Naive thymus-derived CD4-positive, alpha-beta T cell (primary cell): ENCODE measurements at regions of chr7 and their contacts with region 1.

Region 1: DNA sequence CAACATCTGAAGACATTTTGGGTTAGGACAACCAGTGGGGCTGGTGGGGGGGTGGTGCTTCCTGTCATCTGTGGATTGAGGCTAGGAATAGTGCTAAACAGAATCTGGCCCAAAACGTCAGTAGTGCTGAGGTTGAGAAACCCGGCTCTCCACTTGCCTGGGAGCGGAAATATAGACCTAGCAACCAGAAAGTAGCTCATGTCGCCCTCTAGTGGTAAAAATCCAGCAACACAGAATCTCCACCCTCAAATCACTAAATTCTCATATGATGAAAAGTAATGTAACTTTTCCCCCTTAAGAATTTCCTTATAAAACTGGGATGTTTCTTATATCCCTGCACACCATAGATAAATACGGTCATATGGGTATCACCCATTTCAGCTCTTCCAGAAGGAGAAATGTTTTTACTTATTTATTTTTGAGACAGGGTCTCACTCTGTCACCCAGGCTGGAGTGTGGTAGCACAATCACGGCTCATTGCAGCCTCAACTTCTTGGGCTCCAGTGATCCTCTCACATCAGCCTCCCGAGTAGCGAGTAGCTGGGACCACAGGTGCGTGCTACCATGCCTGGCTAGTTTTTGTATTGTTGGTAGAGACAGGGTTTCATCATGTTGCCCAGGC is 34.4 kb downstream of the ZC3HAV1 start:
- DNase-seq: peak; percentile 20 to 82 (median 76)
- ATAC-seq: peak; percentile 91
- H3K4me3 ChIP-seq: no peak overlapping the region
- H3K4me3 Mint-ChIP-seq: peak overlapping the region in 9 of 10 donors; percentile 45 to 77 (median 65)
- H3K27ac ChIP-seq: peak overlapping the region; percentile 64
- H3K27ac Mint-ChIP-seq: peak overlapping the region; percentile 73 to 92 (median 84)
- H3K4me1 ChIP-seq: peaks cover 16 to 55% of the 10 kb centered on the region in 2 donors
- H3K4me1 Mint-ChIP-seq: peaks cover 37 to 81% (median 73%) of the 10 kb centered on the region in 7 donors
- H3K27me3 ChIP-seq: no peaks in the 10 kb centered on the region
- H3K27me3 Mint-ChIP-seq: no peaks in the 10 kb centered on the region

Region 2: GRCh38 chr7:138886501-138886917 is 188.6 kb before region 1 on chr7:
- CTCF ChIA-PET with region 1: interaction called, 14 read pairs
- POLR2A ChIA-PET with region 1: interaction called, 6 read pairs
- intact Hi-C with region 1: loop called (anchors 1 kb)
- DNase-seq: peak in 7 of 9 donors; percentile 63 to 82 (median 78)
- ATAC-seq: peak; percentile 91
- H3K4me3 ChIP-seq: no peak overlapping the region
- H3K4me3 Mint-ChIP-seq: peak overlapping the region in 7 of 10 donors; percentile 41 to 67 (median 60)
- H3K27ac ChIP-seq: no peak overlapping the region
- H3K27ac Mint-ChIP-seq: peak overlapping the region; percentile 9 to 88 (median 61)
- H3K4me1 ChIP-seq: peaks cover 3 to 4% of the 10 kb centered on the region in 2 donors
- H3K4me1 Mint-ChIP-seq: peaks cover 3 to 32% (median 23%) of the 10 kb centered on the region in 7 donors
- H3K27me3 ChIP-seq: no peaks in the 10 kb centered on the region
- H3K27me3 Mint-ChIP-seq: peaks cover 0 to 13% (median 0%) of the 10 kb centered on the region in 5 donors

Region 3: DNA sequence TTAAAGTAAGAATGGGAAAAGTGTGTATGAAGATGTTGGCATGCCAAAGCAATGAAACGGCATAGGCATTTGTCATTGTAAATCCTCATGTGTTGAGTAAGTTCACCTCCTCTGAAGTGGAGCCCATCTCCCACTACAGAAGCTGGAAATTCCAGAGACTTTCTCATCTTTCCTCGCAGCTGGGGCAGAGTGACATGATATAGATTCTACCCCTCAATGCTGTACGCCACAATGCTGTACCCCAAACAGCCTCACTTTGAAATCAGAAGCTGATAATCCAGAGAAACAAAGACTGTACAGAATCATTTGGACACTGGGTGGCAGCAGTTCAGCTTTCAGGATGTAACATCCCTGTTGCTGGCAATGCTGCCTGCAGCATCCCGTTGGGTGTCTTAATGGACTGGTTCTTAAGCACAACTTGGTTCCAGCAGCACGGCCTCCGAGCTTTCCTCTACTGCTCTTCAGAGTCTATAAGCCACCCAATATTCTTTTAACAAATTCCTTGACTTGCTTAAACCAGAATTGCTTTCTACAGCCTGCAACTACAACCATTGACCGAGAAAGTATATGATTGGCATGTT is 58.1 kb before region 1 on chr7:
- CTCF ChIA-PET with region 1: interaction called, 41 read pairs
- POLR2A ChIA-PET with region 1: interaction called, 4 read pairs
- intact Hi-C with region 1: loop called (anchors 1 kb)
- DNase-seq: peak; percentile 17 to 76 (median 52)
- ATAC-seq: peak; percentile 94
- H3K4me3 ChIP-seq: no peak overlapping the region
- H3K4me3 Mint-ChIP-seq: no peak overlapping the region
- H3K27ac ChIP-seq: no peak overlapping the region
- H3K27ac Mint-ChIP-seq: peak overlapping the region in 1 of 9 donors; percentile 52
- H3K4me1 ChIP-seq: no peaks in the 10 kb centered on the region
- H3K4me1 Mint-ChIP-seq: peaks cover 0 to 10% (median 6%) of the 10 kb centered on the region in 7 donors
- H3K27me3 ChIP-seq: no peaks in the 10 kb centered on the region
- H3K27me3 Mint-ChIP-seq: peaks cover 0 to 16% (median 5%) of the 10 kb centered on the region in 5 donors

Region 4: DNA sequence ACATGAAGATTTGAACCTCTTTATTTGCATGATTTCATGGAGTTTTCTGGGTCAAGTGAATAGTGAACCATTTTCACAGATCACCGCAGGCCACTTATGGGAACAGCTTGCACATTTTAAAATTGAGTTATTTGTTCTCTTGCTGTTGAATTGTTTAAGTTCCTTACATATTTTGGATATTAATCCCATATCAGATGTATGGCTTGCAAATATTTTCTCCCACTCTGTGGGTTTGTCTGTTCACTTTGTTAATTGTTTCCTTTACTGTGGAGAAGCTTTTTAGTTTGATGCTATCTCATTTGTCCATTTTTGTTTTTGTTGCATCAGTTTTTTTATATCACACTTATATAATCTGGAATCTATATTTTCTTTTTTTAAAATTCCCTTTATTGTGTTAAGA is 25.2 kb before region 1 on chr7:
- CTCF ChIA-PET with region 1: interaction called, 11 read pairs
- POLR2A ChIA-PET with region 1: interaction called, 8 read pairs
- intact Hi-C with region 1: loop called (anchors 1 to 2 kb)
- DNase-seq: no peak
- ATAC-seq: no peak
- H3K4me3 ChIP-seq: no peak overlapping the region
- H3K4me3 Mint-ChIP-seq: peak overlapping the region in 1 of 10 donors; percentile 7
- H3K27ac ChIP-seq: no peak overlapping the region
- H3K27ac Mint-ChIP-seq: peak overlapping the region in 7 of 9 donors; percentile 26 to 86 (median 62)
- H3K4me1 ChIP-seq: peaks cover 13 to 17% of the 10 kb centered on the region in 2 donors
- H3K4me1 Mint-ChIP-seq: peaks cover 17 to 68% (median 54%) of the 10 kb centered on the region in 7 donors
- H3K27me3 ChIP-seq: no peaks in the 10 kb centered on the region
- H3K27me3 Mint-ChIP-seq: no peaks in the 10 kb centered on the region

Region 5: GRCh38 chr7:139086454-139086853 is 11.3 kb after region 1 on chr7:
- CTCF ChIA-PET with region 1: interaction called, 34 read pairs
- POLR2A ChIA-PET with region 1: interaction called, 21 read pairs
- intact Hi-C with region 1: loop called (anchors 1 kb)
- DNase-seq: no peak
- ATAC-seq: no peak
- H3K4me3 ChIP-seq: no peak overlapping the region
- H3K4me3 Mint-ChIP-seq: peak overlapping the region in 9 of 10 donors; percentile 18 to 98 (median 65)
- H3K27ac ChIP-seq: peak overlapping the region; percentile 18
- H3K27ac Mint-ChIP-seq: peak overlapping the region; percentile 57 to 93 (median 84)
- H3K4me1 ChIP-seq: peaks cover 60 to 77% of the 10 kb centered on the region in 2 donors
- H3K4me1 Mint-ChIP-seq: peaks cover 65 to 98% (median 90%) of the 10 kb centered on the region in 7 donors
- H3K27me3 ChIP-seq: no peaks in the 10 kb centered on the region
- H3K27me3 Mint-ChIP-seq: no peaks in the 10 kb centered on the region

Region 6: GRCh38 chr7:139104091-139104450 is 28.9 kb after region 1 on chr7:
- CTCF ChIA-PET with region 1: interaction called, 8 read pairs
- POLR2A ChIA-PET with region 1: interaction called, 40 read pairs
- intact Hi-C with region 1: loop called (anchors 1 kb)
- DNase-seq: peak in 5 of 9 donors; percentile 41 to 55 (median 51)
- ATAC-seq: no peak
- H3K4me3 ChIP-seq: peak overlapping the region; percentile 80
- H3K4me3 Mint-ChIP-seq: peak overlapping the region; percentile 88 to 100 (median 96)
- H3K27ac ChIP-seq: peak overlapping the region; percentile 93
- H3K27ac Mint-ChIP-seq: peak overlapping the region; percentile 83 to 95 (median 92)
- H3K4me1 ChIP-seq: peaks cover 13 to 16% of the 10 kb centered on the region in 2 donors
- H3K4me1 Mint-ChIP-seq: peaks cover 22 to 46% (median 34%) of the 10 kb centered on the region in 7 donors
- H3K27me3 ChIP-seq: no peaks in the 10 kb centered on the region
- H3K27me3 Mint-ChIP-seq: peaks cover 0 to 2% (median 0%) of the 10 kb centered on the region in 5 donors

Region 7: DNA sequence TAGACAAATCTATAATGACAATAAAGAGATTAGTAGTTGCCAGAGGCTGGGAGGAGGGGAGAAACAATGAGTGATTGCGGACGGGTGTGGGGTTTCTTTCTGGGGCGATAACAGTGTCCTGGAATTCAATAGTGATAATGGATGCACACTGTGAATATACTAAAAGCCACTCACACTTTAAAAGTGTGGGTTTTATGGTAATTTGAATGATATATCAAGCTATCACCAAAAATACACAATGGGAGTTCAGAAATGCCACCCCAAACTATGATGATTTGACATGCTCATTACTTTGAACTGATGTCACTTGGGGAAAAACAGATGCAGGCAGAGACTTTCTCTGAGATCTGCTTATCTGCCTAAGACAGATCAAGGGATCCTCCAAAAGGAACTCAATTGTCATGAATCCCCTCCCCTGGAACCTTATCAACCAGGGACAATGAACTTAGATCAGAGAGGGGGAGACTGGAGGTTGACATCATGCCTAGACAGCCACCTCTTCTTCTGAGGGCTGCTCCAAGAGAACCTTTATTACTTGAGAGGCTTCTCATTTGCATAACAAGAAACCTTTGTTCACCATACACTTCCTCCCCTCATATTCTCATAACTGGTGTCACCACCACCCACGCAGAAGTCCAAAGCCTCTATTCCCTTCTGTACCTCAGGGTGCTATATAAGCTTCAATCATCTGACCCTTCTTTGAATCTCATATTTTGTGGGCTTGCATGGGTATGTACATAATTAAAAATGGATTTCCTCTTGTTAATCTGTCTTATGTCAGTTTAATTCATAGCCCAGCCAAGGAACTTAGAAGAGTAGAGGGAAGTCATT is 49.2 kb after region 1 on chr7:
- CTCF ChIA-PET with region 1: interaction called, 18 read pairs
- POLR2A ChIA-PET with region 1: interaction called, 6 read pairs
- intact Hi-C with region 1: loop called in 1 of 2 experiments (anchors 1 kb)
- DNase-seq: no peak
- ATAC-seq: no peak
- H3K4me3 ChIP-seq: no peak overlapping the region
- H3K4me3 Mint-ChIP-seq: peak overlapping the region in 2 of 10 donors; percentile 3 to 31
- H3K27ac ChIP-seq: no peak overlapping the region
- H3K27ac Mint-ChIP-seq: peak overlapping the region in 1 of 9 donors; percentile 43
- H3K4me1 ChIP-seq: peaks cover 1 to 20% of the 10 kb centered on the region in 2 donors
- H3K4me1 Mint-ChIP-seq: peaks cover 7 to 40% (median 25%) of the 10 kb centered on the region in 7 donors
- H3K27me3 ChIP-seq: no peaks in the 10 kb centered on the region
- H3K27me3 Mint-ChIP-seq: peaks cover 0 to 7% (median 0%) of the 10 kb centered on the region in 5 donors

Region 8: GRCh38 chr7:139169801-139170200 is 94.7 kb after region 1 on chr7:
- CTCF ChIA-PET with region 1: no interaction called
- POLR2A ChIA-PET with region 1: no interaction called
- intact Hi-C with region 1: no loop called
- DNase-seq: no peak
- ATAC-seq: no peak
- H3K4me3 ChIP-seq: no peak overlapping the region
- H3K4me3 Mint-ChIP-seq: no peak overlapping the region
- H3K27ac ChIP-seq: no peak overlapping the region
- H3K27ac Mint-ChIP-seq: no peak overlapping the region
- H3K4me1 ChIP-seq: no peaks in the 10 kb centered on the region
- H3K4me1 Mint-ChIP-seq: peaks cover 0 to 2% (median 0%) of the 10 kb centered on the region in 7 donors
- H3K27me3 ChIP-seq: no peaks in the 10 kb centered on the region
- H3K27me3 Mint-ChIP-seq: no peaks in the 10 kb centered on the region